ENCODE measurements at regions of chr21 and their contacts with region 1.

Region 1: GRCh38 chr21:42496122-42496900 is at the start of gene RSPH1:
- DNase-seq: peak; percentile 100
- H3K4me3 Mint-ChIP-seq: peak within 1 kb of the TSS; percentile 90
- H3K27ac Mint-ChIP-seq: peak within 1 kb of the TSS; percentile 67
- H3K4me1 Mint-ChIP-seq: peaks cover 21% of the 10 kb centered on the region
- H3K27me3 Mint-ChIP-seq: peaks cover 1% of the 10 kb centered on the region
- total RNA-seq, gene RSPH1: 0.38 to 0.53 TPM

Region 2: GRCh38 chr21:42513985-42514882 is 17.9 kb after region 1 on chr21:
- CTCF ChIA-PET with region 1: no interaction called
- POLR2A ChIA-PET with region 1: interaction called, 6 read pairs
- intact Hi-C with region 1: loop called (anchors 1 kb)
- DNase-seq: peak; percentile 77
- H3K4me3 Mint-ChIP-seq: peak overlapping the region; percentile 77
- H3K27ac Mint-ChIP-seq: peak overlapping the region; percentile 54
- H3K4me1 Mint-ChIP-seq: peaks cover 30% of the 10 kb centered on the region
- H3K27me3 Mint-ChIP-seq: no peaks in the 10 kb centered on the region

Region 3: DNA sequence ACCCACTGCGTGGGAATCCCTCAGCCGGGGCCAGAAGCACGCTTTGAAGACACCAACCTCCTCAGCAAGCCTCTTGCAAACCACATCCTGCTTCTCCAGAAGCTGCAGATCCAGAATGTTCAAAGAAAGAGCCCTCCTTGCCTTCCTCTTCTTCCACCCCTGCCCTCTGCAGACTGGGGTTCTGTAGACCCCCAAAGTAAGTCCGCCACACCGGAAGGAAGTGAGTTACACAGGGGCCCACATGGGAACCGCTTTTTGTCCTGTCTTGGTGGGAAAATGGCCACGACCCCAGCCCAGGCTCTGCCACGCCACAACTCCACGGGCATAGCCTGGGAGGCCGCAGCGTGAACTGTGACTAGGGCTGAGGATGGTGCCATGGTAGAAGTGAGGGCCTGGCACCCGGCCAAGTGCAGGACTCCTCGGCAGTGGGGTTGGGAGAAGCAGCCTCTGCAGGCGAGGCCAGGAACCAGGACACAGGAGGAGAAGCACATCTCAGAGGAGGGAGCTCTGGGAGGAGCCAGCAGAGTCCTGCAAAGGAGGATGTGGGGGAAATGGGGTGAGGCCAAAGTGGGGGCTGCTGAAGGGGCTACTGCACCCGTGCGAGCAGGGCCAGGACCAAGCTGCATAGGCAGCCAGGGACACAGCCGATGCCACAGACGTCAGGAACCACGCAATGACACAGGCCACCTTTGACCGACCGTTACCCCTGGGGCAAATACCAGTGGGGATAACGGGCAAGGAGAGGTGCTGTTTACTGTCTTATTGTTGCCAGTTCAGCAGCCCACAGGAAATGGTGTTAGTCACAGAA is 188.0 kb after region 1 on chr21:
- CTCF ChIA-PET with region 1: no interaction called
- POLR2A ChIA-PET with region 1: no interaction called
- intact Hi-C with region 1: no loop called
- DNase-seq: peak; percentile 77
- H3K4me3 Mint-ChIP-seq: peak overlapping the region; percentile 72
- H3K27ac Mint-ChIP-seq: peak overlapping the region; percentile 88
- H3K4me1 Mint-ChIP-seq: peaks cover 47% of the 10 kb centered on the region
- H3K27me3 Mint-ChIP-seq: peaks cover 4% of the 10 kb centered on the region